B cell (primary cell): ENCODE measurements at regions of chr19 and their contacts with region 1.

Region 1: DNA sequence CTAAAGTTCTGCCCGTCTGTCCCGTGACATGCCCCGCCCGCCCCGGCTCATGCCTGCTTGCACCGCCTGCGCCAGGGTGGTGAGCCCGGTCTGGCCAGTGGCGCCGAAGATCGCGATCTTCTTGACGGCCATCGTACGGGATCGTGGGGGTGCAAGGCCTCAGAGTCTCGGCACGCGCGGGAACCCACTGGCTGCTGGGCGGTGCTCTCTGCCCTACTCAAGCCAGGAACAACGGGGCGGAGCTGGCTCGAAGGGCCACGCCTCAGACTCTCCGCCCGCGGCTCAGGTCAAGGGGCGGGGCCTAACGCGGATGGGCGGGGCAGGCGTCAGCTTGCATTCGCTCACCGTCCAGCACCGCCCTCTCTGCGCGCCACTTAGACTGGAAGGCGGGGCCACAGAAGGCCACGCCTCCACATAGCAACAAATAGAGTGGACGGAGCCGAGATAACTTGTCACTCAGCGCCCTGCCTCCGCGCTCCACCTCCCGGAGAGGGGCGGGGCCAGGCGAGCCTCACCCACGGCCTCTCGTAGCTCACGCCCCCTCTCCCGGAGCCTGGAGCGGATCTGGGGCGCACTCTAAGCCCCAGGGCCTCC is at the start of gene BLVRB:
- DNase-seq: peak; percentile 100
- ATAC-seq: peak; percentile 89
- H3K4me3 ChIP-seq: peak within 1 kb of the TSS; percentile 1 to 70 (median 62)
- H3K4me3 Mint-ChIP-seq: peak within 1 kb of the TSS; percentile 87
- H3K27ac ChIP-seq: peak within 1 kb of the TSS; percentile 38 to 60
- H3K27ac Mint-ChIP-seq: peak within 1 kb of the TSS; percentile 66
- H3K4me1 ChIP-seq: peaks cover 30 to 44% of the 10 kb centered on the region in 2 donors
- H3K4me1 Mint-ChIP-seq: peaks cover 44% of the 10 kb centered on the region
- H3K27me3 ChIP-seq: peaks cover 0 to 23% (median 3%) of the 10 kb centered on the region in 4 experiments
- H3K27me3 Mint-ChIP-seq: peaks cover 12% of the 10 kb centered on the region
- CTCF ChIP-seq: no peak
- total RNA-seq, gene BLVRB: 11.8 and 14.2 TPM in 2 replicates

Region 2: GRCh38 chr19:39996811-39997594 is 468.7 kb before region 1 on chr19 and contains the start of gene ZNF546:
- CTCF ChIA-PET with region 1: no interaction called
- POLR2A ChIA-PET with region 1: no interaction called
- intact Hi-C with region 1: loop called (anchors 5 kb)
- DNase-seq: peak; percentile 92
- ATAC-seq: peak; percentile 93
- H3K4me3 ChIP-seq: peak within 1 kb of the TSS; percentile 59 to 98 (median 92)
- H3K4me3 Mint-ChIP-seq: peak within 1 kb of the TSS; percentile 96
- H3K27ac ChIP-seq: peak within 1 kb of the TSS; percentile 78 to 89
- H3K27ac Mint-ChIP-seq: peak within 1 kb of the TSS; percentile 92
- H3K4me1 ChIP-seq: peaks cover 9 to 16% of the 10 kb centered on the region in 2 donors
- H3K4me1 Mint-ChIP-seq: peaks cover 28% of the 10 kb centered on the region
- H3K27me3 ChIP-seq: no peaks in the 10 kb centered on the region
- H3K27me3 Mint-ChIP-seq: no peaks in the 10 kb centered on the region
- CTCF ChIP-seq: no peak
- total RNA-seq, gene ZNF546: 15.7 and 16.6 TPM in 2 replicates

Region 3: GRCh38 chr19:40221858-40222837 is 243.5 kb before region 1 on chr19:
- CTCF ChIA-PET with region 1: no interaction called
- POLR2A ChIA-PET with region 1: no interaction called
- intact Hi-C with region 1: no loop called
- DNase-seq: peak; percentile 89
- ATAC-seq: peak; percentile 84
- H3K4me3 ChIP-seq: no peak overlapping the region
- H3K4me3 Mint-ChIP-seq: no peak overlapping the region
- H3K27ac ChIP-seq: no peak overlapping the region
- H3K27ac Mint-ChIP-seq: peak overlapping the region; percentile 1
- H3K4me1 ChIP-seq: peaks cover 30 to 42% of the 10 kb centered on the region in 2 donors
- H3K4me1 Mint-ChIP-seq: peaks cover 18% of the 10 kb centered on the region
- H3K27me3 ChIP-seq: peaks cover 0 to 65% (median 37%) of the 10 kb centered on the region in 4 experiments
- H3K27me3 Mint-ChIP-seq: peaks cover 45% of the 10 kb centered on the region
- CTCF ChIP-seq: peak; percentile 86

Region 4: DNA sequence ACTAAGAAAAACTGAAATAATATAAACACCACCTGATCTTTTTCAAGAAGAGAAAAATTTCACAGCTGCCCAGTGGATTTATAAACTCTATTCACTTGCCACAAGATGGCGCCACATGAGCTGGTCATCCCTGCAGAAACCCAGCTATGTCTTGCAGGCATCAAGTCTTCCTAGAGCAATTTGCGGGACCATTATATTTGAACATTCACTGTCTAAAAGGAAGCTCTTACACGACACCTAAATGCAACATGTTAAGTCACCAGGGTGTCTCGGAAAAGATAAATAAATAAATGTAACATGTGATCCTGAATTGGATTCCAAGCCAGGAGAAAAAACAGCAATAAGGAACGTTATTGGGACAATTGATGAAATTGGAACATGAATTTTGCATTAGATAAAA is 160.3 kb before region 1 on chr19:
- CTCF ChIA-PET with region 1: interaction called, 21 read pairs
- POLR2A ChIA-PET with region 1: no interaction called
- intact Hi-C with region 1: no loop called
- DNase-seq: peak; percentile 84
- ATAC-seq: peak; percentile 68
- H3K4me3 ChIP-seq: no peak overlapping the region
- H3K4me3 Mint-ChIP-seq: no peak overlapping the region
- H3K27ac ChIP-seq: no peak overlapping the region
- H3K27ac Mint-ChIP-seq: no peak overlapping the region
- H3K4me1 ChIP-seq: peaks cover 0 to 3% of the 10 kb centered on the region in 2 donors
- H3K4me1 Mint-ChIP-seq: peaks cover 2% of the 10 kb centered on the region
- H3K27me3 ChIP-seq: no peaks in the 10 kb centered on the region
- H3K27me3 Mint-ChIP-seq: no peaks in the 10 kb centered on the region
- CTCF ChIP-seq: peak; percentile 88

Region 5: GRCh38 chr19:40403262-40403984 is 62.2 kb before region 1 on chr19:
- CTCF ChIA-PET with region 1: interaction called, 4 read pairs
- POLR2A ChIA-PET with region 1: interaction called, 3 read pairs
- intact Hi-C with region 1: loop called (anchors 1 kb)
- DNase-seq: peak; percentile 86
- ATAC-seq: peak; percentile 81
- H3K4me3 ChIP-seq: peak overlapping the region; percentile 27 to 84 (median 74)
- H3K4me3 Mint-ChIP-seq: peak overlapping the region; percentile 97
- H3K27ac ChIP-seq: peak overlapping the region; percentile 30 to 49
- H3K27ac Mint-ChIP-seq: peak overlapping the region; percentile 93
- H3K4me1 ChIP-seq: peaks cover 6 to 18% of the 10 kb centered on the region in 2 donors
- H3K4me1 Mint-ChIP-seq: peaks cover 29% of the 10 kb centered on the region
- H3K27me3 ChIP-seq: peaks cover 0 to 6% (median 3%) of the 10 kb centered on the region in 4 experiments
- H3K27me3 Mint-ChIP-seq: peaks cover 8% of the 10 kb centered on the region
- CTCF ChIP-seq: no peak

Region 6: DNA sequence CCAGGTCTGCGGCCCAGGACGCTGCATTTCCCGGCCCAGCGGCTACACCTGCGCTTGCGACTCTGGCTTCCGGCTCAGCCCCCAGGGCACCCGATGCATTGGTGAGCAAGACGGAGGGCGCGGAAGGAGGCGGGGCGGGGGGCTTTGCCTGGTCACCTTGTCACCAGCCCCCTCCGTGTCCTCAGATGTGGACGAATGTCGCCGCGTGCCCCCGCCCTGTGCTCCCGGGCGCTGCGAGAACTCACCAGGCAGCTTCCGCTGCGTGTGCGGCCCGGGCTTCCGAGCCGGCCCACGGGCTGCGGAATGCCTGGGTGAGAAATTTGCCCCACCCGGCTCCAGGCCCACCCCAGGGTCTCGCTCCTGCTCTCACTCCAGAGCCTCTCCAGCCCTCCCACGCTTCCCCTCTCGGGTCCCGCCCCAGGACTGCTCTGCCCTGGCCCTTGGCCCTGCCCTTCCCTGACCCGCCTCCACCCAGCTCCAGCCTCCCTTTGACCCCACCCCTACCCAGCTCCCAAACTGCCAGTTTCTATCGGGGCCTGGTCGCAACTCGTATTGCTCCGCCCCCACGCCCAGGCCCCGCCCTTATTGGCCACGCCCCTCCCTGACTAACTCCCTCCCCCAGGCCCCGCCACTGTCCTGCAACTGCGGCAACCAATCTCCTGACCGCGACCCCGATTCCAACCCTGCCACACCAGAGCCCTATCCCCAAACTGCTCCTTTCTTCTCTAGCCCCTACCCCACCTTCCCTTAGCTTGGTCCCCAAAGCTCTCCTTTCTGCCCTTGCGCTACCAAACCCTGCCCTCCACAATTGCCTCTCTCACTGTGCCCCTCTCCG is 144.1 kb after region 1 on chr19:
- CTCF ChIA-PET with region 1: no interaction called
- POLR2A ChIA-PET with region 1: interaction called, 3 read pairs
- intact Hi-C with region 1: loop called (anchors 2 kb)
- DNase-seq: peak; percentile 90
- ATAC-seq: peak; percentile 57
- H3K4me3 ChIP-seq: peak overlapping the region in 4 of 5 experiments; percentile 49 to 72 (median 62)
- H3K4me3 Mint-ChIP-seq: peak overlapping the region; percentile 92
- H3K27ac ChIP-seq: peak overlapping the region; percentile 83 to 93
- H3K27ac Mint-ChIP-seq: peak overlapping the region; percentile 98
- H3K4me1 ChIP-seq: peaks cover 38 to 58% of the 10 kb centered on the region in 2 donors
- H3K4me1 Mint-ChIP-seq: peaks cover 56% of the 10 kb centered on the region
- H3K27me3 ChIP-seq: no peaks in the 10 kb centered on the region
- H3K27me3 Mint-ChIP-seq: no peaks in the 10 kb centered on the region
- CTCF ChIP-seq: no peak